Sigmoid colon (tissue), 7 donors: ENCODE measurements at regions of chr17 and their contacts with region 1.

Region 1: GRCh38 chr17:4412933-4413831 is 20.6 kb upstream of the SPNS3 start:
- DNase-seq: peak; percentile 96
- H3K4me3 ChIP-seq: peak overlapping the region in 2 of 4 donors; percentile 12 to 17
- H3K27ac ChIP-seq: peak overlapping the region in 3 of 4 donors; percentile 8 to 45 (median 32)
- H3K4me1 ChIP-seq: peaks cover 0 to 6% (median 5%) of the 10 kb centered on the region in 4 donors
- H3K27me3 ChIP-seq: no peaks in the 10 kb centered on the region
- CTCF ChIP-seq: peak; percentile 86 to 92 (median 90)
- EP300 ChIP-seq: no peak
- POLR2A ChIP-seq: no peak

Region 2: DNA sequence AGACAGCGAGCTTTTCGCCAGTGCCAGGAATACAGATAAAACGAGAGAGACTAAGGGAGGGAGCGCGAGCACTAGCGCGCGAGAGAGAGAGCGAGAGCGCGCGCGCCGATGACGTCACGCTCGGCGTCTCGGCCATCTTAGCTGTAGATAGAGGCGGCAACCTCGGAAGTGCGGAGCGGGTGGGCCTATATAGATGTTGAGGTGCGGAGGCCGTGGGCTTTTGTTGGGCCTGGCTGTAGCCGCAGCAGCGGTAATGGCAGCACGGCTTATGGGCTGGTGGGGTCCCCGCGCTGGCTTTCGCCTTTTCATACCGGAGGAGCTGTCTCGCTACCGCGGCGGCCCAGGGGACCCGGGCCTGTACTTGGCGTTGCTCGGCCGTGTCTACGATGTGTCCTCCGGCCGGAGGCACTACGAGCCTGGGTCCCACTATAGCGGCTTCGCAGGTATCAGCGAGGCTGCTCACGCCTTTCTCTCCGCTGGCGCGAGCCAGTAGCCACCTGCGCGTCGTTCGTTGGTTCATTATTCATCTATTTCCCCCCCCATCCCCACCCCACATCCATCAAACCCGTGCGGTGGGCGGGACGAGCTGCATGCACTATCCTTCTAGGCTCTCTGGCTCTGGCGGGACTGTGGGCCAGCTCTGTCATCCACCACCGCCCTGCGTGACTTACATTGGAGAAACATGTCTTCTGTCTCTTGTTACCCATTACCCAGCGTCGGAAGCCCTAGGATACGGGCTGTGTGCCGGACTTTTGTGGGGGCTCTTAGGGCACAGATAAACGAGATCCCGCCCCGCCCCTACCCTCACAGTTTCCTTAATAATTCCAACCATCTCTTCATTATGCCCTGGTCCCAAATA is 269.4 kb before region 1 on chr17:
- intact Hi-C with region 1: loop called (anchors 5 kb)
- DNase-seq: peak; percentile 96
- H3K4me3 ChIP-seq: peak overlapping the region; percentile 76 to 99 (median 94)
- H3K27ac ChIP-seq: peak overlapping the region; percentile 97 to 100 (median 99)
- H3K4me1 ChIP-seq: peaks cover 0 to 47% (median 44%) of the 10 kb centered on the region in 4 donors
- H3K27me3 ChIP-seq: no peaks in the 10 kb centered on the region
- CTCF ChIP-seq: no peak
- EP300 ChIP-seq: no peak
- POLR2A ChIP-seq: peak; percentile 83 to 85

Region 3: GRCh38 chr17:4199818-4200402 is 213.3 kb before region 1 on chr17:
- intact Hi-C with region 1: loop called (anchors 1 kb)
- DNase-seq: no peak
- H3K4me3 ChIP-seq: no peak overlapping the region
- H3K27ac ChIP-seq: peak overlapping the region in 2 of 4 donors; percentile 8 to 39
- H3K4me1 ChIP-seq: peaks cover 0 to 24% (median 16%) of the 10 kb centered on the region in 4 donors
- H3K27me3 ChIP-seq: no peaks in the 10 kb centered on the region
- CTCF ChIP-seq: peak; percentile 49 to 71 (median 58)
- EP300 ChIP-seq: no peak
- POLR2A ChIP-seq: no peak

Region 4: GRCh38 chr17:4214157-4214556 is 199.0 kb before region 1 on chr17:
- intact Hi-C with region 1: loop called (anchors 1 kb)
- DNase-seq: no peak
- H3K4me3 ChIP-seq: no peak overlapping the region
- H3K27ac ChIP-seq: peak overlapping the region; percentile 29 to 94 (median 37)
- H3K4me1 ChIP-seq: peaks cover 0 to 53% (median 31%) of the 10 kb centered on the region in 4 donors
- H3K27me3 ChIP-seq: no peaks in the 10 kb centered on the region
- CTCF ChIP-seq: no peak
- EP300 ChIP-seq: no peak
- POLR2A ChIP-seq: no peak

Region 5: DNA sequence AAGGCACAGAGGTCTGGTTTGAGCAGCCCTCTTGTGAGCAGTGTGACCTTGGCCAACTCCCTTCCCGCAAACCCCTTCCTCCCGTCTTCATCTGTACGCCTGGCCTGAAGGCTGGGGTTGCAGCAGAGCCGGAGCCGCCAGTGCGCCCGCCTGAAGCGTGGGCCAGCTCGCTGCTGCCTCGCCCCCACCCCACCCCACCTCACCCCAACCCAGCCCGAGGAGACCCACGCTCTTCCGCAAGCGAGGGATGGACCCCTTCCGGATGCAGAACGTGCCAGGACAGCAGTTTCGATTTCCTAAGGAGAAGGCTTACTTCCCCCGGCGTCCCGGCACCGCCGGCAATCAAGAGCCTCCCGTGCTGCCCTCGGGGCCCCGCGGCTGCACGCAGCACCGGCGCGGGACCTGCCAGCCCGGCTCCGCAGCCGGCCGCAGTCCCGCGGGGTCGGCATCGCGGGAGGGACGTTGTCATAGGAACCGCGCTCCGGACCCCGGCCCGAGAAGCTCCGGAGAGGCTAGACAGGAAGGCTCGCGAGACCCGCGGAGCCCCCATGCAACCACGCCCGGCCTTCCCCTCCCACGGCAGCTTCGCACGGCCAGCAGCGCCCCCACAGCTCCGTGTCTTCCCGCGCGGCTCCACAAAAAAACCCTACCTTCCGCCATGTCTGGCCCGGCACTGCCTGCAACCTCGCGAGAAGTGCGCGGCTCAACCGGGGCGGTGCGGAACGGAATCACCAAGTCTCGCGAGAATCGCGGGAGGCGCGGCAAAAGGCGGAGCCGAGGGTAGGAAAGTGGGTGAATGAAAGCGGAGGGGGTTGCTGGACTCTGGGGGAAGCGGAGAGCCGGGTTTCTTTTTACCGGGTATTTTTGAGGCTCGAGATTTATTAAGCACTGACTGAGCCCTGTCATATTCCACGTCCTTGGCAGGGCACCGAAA is 149.6 kb before region 1 on chr17 and contains the start of gene ANKFY1:
- intact Hi-C with region 1: loop called (anchors 5 kb)
- DNase-seq: peak; percentile 98
- H3K4me3 ChIP-seq: peak within 1 kb of the TSS; percentile 93 to 100 (median 99)
- H3K27ac ChIP-seq: peak within 1 kb of the TSS; percentile 87 to 96 (median 94)
- H3K4me1 ChIP-seq: peaks cover 0 to 33% (median 29%) of the 10 kb centered on the region in 4 donors
- H3K27me3 ChIP-seq: no peaks in the 10 kb centered on the region
- CTCF ChIP-seq: no peak
- EP300 ChIP-seq: no peak
- POLR2A ChIP-seq: peak; percentile 73 to 75
- total RNA-seq, gene ANKFY1: 52.6 to 68.0 (median 59.8) TPM

Region 6: DNA sequence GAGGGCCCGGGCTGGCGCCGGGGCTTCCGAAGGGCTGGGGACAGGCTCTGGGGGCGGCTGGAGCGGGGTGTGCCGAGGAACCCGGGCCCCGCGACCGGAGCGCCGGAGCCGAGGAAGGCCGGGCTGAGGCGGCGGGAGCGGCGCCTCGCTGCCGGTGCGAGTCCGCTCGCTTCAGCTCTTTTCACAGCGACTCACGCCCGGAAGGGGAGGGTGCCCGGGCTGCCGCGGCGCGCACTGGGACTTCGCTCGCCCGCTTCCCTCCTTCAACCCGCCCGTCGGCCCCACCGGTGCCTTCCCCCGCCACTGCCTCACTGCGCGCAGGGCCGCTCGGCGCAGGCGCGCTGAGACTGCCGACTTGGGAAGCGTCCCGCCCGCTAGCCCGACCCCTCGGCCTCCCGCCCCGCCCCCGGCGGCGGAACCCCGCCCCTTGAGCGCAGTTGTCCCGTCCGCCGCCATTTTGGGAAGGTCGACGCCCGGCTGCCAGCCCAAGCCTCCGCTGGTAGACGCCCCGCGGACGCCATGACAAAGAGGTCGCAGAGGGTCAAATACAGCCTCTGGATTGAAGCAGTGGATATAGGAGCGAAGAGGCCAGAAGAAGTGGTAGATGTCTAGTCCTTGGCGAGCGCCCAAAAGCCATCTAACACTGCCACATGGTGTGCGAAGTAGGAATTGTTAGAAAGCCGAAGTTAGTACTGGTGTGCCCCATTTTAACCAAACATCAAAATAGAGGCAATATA is 46.7 kb before region 1 on chr17 and contains the start of gene UBE2G1:
- intact Hi-C with region 1: loop called (anchors 5 kb)
- DNase-seq: peak; percentile 99
- H3K4me3 ChIP-seq: peak within 1 kb of the TSS; percentile 80 to 100 (median 88)
- H3K27ac ChIP-seq: peak within 1 kb of the TSS; percentile 98 to 100 (median 98)
- H3K4me1 ChIP-seq: peaks cover 0 to 37% (median 31%) of the 10 kb centered on the region in 4 donors
- H3K27me3 ChIP-seq: no peaks in the 10 kb centered on the region
- CTCF ChIP-seq: no peak
- EP300 ChIP-seq: no peak
- POLR2A ChIP-seq: peak; percentile 57 to 84
- total RNA-seq, gene UBE2G1: 83.2 to 111 (median 96.9) TPM